ENCODE measurements at regions of chr4 and their contacts with region 1.

Region 1: GRCh38 chr4:141027421-141027820 is 105.8 kb downstream of the RNF150 start:
- DNase-seq: no peak
- H3K4me3 ChIP-seq: no peak overlapping the region
- H3K4me3 Mint-ChIP-seq: no peak overlapping the region
- H3K27ac Mint-ChIP-seq: no peak overlapping the region
- H3K4me1 ChIP-seq: no peaks in the 10 kb centered on the region
- H3K4me1 Mint-ChIP-seq: no peaks in the 10 kb centered on the region
- H3K27me3 ChIP-seq: no peaks in the 10 kb centered on the region; the same call in none of the 2 replicates
- H3K27me3 Mint-ChIP-seq: peaks cover 17% of the 10 kb centered on the region
- CTCF ChIP-seq: no peak

Region 2: GRCh38 chr4:141356963-141357335 is 329.5 kb after region 1 on chr4:
- CTCF ChIA-PET with region 1: no interaction called
- POLR2A ChIA-PET with region 1: interaction called, 10 read pairs
- intact Hi-C with region 1: no loop called
- DNase-seq: no peak
- H3K4me3 ChIP-seq: no peak overlapping the region
- H3K4me3 Mint-ChIP-seq: no peak overlapping the region
- H3K27ac Mint-ChIP-seq: no peak overlapping the region
- H3K4me1 ChIP-seq: no peaks in the 10 kb centered on the region
- H3K4me1 Mint-ChIP-seq: no peaks in the 10 kb centered on the region
- H3K27me3 ChIP-seq: no peaks in the 10 kb centered on the region
- H3K27me3 Mint-ChIP-seq: peaks cover 7% of the 10 kb centered on the region
- CTCF ChIP-seq: no peak

Region 3: GRCh38 chr4:141771889-141772830 is 744.7 kb after region 1 on chr4:
- CTCF ChIA-PET with region 1: no interaction called
- POLR2A ChIA-PET with region 1: no interaction called
- intact Hi-C with region 1: no loop called
- DNase-seq: no peak
- H3K4me3 ChIP-seq: no peak overlapping the region
- H3K4me3 Mint-ChIP-seq: no peak overlapping the region
- H3K27ac Mint-ChIP-seq: no peak overlapping the region
- H3K4me1 ChIP-seq: no peaks in the 10 kb centered on the region
- H3K4me1 Mint-ChIP-seq: no peaks in the 10 kb centered on the region
- H3K27me3 ChIP-seq: no peaks in the 10 kb centered on the region
- H3K27me3 Mint-ChIP-seq: no peaks in the 10 kb centered on the region
- CTCF ChIP-seq: no peak

Measured in Caco-2 (cell line).